CD8-positive, alpha-beta T cell (primary cell): ENCODE measurements at regions of chr1 and their contacts with region 1.

Region 1: DNA sequence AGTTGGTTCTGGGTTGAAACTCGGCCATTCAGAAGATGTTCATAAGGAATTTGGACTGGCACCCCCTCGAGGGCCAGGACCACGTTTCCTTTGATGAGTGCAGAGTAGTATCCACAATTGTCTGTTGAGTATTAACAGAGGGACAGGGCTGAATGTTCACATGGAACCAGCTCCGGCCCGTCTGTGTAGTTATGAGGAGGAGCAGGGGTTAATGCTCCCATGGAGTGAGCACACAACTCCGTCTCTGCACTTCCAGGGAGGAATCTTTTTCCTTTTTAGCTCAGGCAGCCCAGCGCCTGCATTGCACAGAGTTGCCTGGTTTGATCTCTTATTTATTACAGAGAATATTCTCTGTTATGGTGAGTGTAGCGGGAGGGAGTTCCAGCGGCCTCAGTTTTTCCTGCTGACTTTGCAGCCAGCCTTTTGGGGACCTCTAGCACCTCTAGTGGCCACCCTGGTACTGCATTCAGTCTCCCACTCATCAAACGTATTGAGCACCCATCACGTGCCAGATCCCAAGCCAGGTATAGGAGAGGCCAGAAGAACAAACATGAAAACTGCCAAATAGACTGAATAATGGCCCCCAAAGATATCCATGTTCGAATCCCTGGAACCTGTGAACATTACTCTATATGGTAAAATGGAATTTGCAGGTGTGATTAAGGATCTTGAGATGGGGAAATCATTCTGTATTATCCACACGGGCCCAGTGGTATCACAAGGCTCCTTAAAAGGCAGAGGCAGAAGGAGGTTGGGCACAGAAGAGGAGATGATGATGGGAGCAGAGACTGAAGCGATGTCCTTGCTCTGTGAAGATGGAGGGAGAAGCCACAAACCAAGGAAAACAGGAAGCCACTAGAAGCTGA is 167.7 kb upstream of the CSF3R start:
- DNase-seq: peak; percentile 24 to 68 (median 53)
- ATAC-seq: no peak
- H3K4me3 ChIP-seq: no peak overlapping the region
- H3K4me3 Mint-ChIP-seq: no peak overlapping the region
- H3K27ac ChIP-seq: no peak overlapping the region
- H3K27ac Mint-ChIP-seq: no peak overlapping the region
- H3K4me1 ChIP-seq: no peaks in the 10 kb centered on the region
- H3K4me1 Mint-ChIP-seq: no peaks in the 10 kb centered on the region
- H3K27me3 ChIP-seq: no peaks in the 10 kb centered on the region
- H3K27me3 Mint-ChIP-seq: peaks cover 58% of the 10 kb centered on the region
- CTCF ChIP-seq: peak; percentile 76

Region 2: GRCh38 chr1:36109041-36109679 is 541.3 kb before region 1 on chr1:
- CTCF ChIA-PET with region 1: no interaction called
- POLR2A ChIA-PET with region 1: no interaction called
- intact Hi-C with region 1: no loop called
- DNase-seq: peak; percentile 31 to 84 (median 69)
- ATAC-seq: peak; percentile 97
- H3K4me3 ChIP-seq: peak overlapping the region in 1 of 2 experiments; percentile 13
- H3K4me3 Mint-ChIP-seq: peak overlapping the region; percentile 55
- H3K27ac ChIP-seq: peak overlapping the region in 1 of 2 experiments; percentile 46
- H3K27ac Mint-ChIP-seq: peak overlapping the region; percentile 80
- H3K4me1 ChIP-seq: peaks cover 39% of the 10 kb centered on the region
- H3K4me1 Mint-ChIP-seq: peaks cover 35% of the 10 kb centered on the region
- H3K27me3 ChIP-seq: no peaks in the 10 kb centered on the region
- H3K27me3 Mint-ChIP-seq: no peaks in the 10 kb centered on the region
- CTCF ChIP-seq: no peak

Region 3: DNA sequence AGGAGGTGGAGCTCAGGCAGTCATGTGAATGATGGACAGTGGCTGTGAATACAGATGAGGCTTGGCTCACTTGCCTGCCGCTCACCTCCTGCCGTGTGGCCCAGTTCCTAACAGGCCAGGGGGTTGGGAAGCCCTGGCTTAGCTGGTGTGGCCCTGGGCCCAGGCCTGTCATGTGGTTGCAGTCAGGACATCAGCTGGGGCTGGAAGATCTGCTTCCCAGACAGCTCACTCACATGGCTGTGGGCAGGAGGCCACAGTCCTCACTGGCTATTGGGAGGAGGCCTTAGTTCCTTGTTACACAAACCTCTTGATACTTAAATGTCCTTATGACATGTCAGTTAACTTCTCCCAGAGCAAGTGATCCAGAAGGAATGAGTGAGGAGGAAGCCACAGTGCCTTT is 28.9 kb before region 1 on chr1:
- CTCF ChIA-PET with region 1: no interaction called
- POLR2A ChIA-PET with region 1: no interaction called
- intact Hi-C with region 1: no loop called
- DNase-seq: no peak
- ATAC-seq: no peak
- H3K4me3 ChIP-seq: no peak overlapping the region
- H3K4me3 Mint-ChIP-seq: no peak overlapping the region
- H3K27ac ChIP-seq: no peak overlapping the region
- H3K27ac Mint-ChIP-seq: no peak overlapping the region
- H3K4me1 ChIP-seq: no peaks in the 10 kb centered on the region
- H3K4me1 Mint-ChIP-seq: peaks cover 10% of the 10 kb centered on the region
- H3K27me3 ChIP-seq: peaks cover 0 to 2% of the 10 kb centered on the region in 2 experiments
- H3K27me3 Mint-ChIP-seq: peaks cover 8% of the 10 kb centered on the region
- CTCF ChIP-seq: no peak

Region 4: DNA sequence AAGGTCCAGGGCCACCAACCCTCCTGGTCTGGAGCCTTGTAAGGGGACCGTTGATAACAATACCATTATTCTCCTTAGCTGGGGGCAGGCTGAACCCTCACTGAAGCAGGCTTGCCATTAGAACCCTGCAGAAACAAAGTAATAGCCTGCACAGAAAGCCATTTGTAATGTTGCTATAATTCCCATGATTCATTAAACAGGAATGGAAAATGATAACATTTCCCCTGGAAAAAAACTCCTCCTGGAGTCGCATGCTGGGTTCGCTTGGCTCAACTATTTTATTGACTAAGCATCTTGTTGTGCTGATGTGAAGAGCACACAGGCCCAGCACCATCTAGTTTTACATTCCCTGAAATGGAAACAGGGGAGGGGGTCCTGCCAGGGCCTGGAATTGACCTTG is 12.2 kb before region 1 on chr1:
- CTCF ChIA-PET with region 1: interaction called, 13 read pairs
- POLR2A ChIA-PET with region 1: no interaction called
- intact Hi-C with region 1: no loop called
- DNase-seq: no peak
- ATAC-seq: no peak
- H3K4me3 ChIP-seq: no peak overlapping the region
- H3K4me3 Mint-ChIP-seq: no peak overlapping the region
- H3K27ac ChIP-seq: no peak overlapping the region
- H3K27ac Mint-ChIP-seq: no peak overlapping the region
- H3K4me1 ChIP-seq: no peaks in the 10 kb centered on the region
- H3K4me1 Mint-ChIP-seq: no peaks in the 10 kb centered on the region
- H3K27me3 ChIP-seq: no peaks in the 10 kb centered on the region
- H3K27me3 Mint-ChIP-seq: peaks cover 18% of the 10 kb centered on the region
- CTCF ChIP-seq: no peak

Region 5: GRCh38 chr1:36664571-36665287 is 14.3 kb after region 1 on chr1:
- CTCF ChIA-PET with region 1: interaction called, 13 read pairs
- POLR2A ChIA-PET with region 1: no interaction called
- intact Hi-C with region 1: no loop called
- DNase-seq: no peak
- ATAC-seq: no peak
- H3K4me3 ChIP-seq: no peak overlapping the region
- H3K4me3 Mint-ChIP-seq: no peak overlapping the region
- H3K27ac ChIP-seq: no peak overlapping the region
- H3K27ac Mint-ChIP-seq: no peak overlapping the region
- H3K4me1 ChIP-seq: no peaks in the 10 kb centered on the region
- H3K4me1 Mint-ChIP-seq: peaks cover 3% of the 10 kb centered on the region
- H3K27me3 ChIP-seq: no peaks in the 10 kb centered on the region
- H3K27me3 Mint-ChIP-seq: peaks cover 27% of the 10 kb centered on the region
- CTCF ChIP-seq: no peak

Region 6: GRCh38 chr1:36771660-36772284 is 121.3 kb after region 1 on chr1:
- CTCF ChIA-PET with region 1: no interaction called
- POLR2A ChIA-PET with region 1: no interaction called
- intact Hi-C with region 1: no loop called
- DNase-seq: no peak
- ATAC-seq: no peak
- H3K4me3 ChIP-seq: no peak overlapping the region
- H3K4me3 Mint-ChIP-seq: no peak overlapping the region
- H3K27ac ChIP-seq: no peak overlapping the region
- H3K27ac Mint-ChIP-seq: no peak overlapping the region
- H3K4me1 ChIP-seq: no peaks in the 10 kb centered on the region
- H3K4me1 Mint-ChIP-seq: no peaks in the 10 kb centered on the region
- H3K27me3 ChIP-seq: peaks cover 0 to 3% of the 10 kb centered on the region in 2 experiments
- H3K27me3 Mint-ChIP-seq: peaks cover 45% of the 10 kb centered on the region
- CTCF ChIP-seq: no peak

Region 7: DNA sequence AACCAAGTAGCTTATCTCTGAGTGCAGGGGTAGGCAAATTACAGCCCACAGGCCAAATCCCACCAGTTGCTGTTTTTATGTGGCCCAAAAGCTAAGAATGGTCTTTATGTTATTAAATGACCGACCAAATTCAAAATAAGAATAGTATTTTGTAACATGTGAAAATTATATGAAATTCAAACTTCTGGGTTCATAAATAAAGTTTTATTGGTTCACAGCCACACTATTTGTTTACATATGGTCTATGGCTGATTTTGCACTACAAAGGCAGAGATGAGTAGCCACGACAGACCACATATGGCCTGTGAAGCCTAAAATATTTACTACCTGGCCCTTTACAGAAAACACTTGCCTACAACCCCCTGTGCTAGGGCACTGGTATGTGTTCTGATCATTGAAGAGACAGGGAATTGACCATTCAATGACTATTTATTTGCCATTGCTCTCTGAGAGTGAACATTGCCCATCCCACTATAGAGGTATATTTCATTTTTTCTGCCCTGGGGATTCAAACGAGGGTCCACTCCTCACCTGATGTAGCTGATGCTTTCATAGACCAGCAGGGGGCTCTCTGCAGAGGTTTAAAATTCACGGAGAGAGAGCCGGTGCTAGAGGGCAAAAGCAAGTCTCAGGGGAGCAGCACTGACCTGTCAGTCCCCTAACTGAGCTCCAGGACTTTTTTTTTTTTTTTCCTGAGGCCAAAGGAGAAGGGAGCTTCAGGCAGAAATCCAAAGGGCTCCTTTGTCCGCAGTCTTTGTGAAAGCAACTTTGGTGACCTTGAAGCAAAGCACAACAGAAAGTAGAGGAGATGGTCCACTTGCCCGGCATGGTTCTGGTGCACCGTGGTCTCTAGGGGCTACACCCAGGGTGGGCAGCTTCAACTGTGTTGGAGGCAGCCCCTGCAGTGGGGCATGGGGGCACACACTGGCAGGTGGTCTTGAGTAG is 952.6 kb after region 1 on chr1:
- CTCF ChIA-PET with region 1: no interaction called
- POLR2A ChIA-PET with region 1: no interaction called
- intact Hi-C with region 1: no loop called
- DNase-seq: peak in 7 of 9 experiments; percentile 10 to 64 (median 39)
- ATAC-seq: peak; percentile 75
- H3K4me3 ChIP-seq: no peak overlapping the region
- H3K4me3 Mint-ChIP-seq: no peak overlapping the region
- H3K27ac ChIP-seq: no peak overlapping the region
- H3K27ac Mint-ChIP-seq: no peak overlapping the region
- H3K4me1 ChIP-seq: no peaks in the 10 kb centered on the region
- H3K4me1 Mint-ChIP-seq: no peaks in the 10 kb centered on the region
- H3K27me3 ChIP-seq: peaks cover 0 to 2% of the 10 kb centered on the region in 2 experiments
- H3K27me3 Mint-ChIP-seq: peaks cover 7% of the 10 kb centered on the region
- CTCF ChIP-seq: peak; percentile 80